ENCODE measurements at regions of chr1 and their contacts with region 1.

Region 1: GRCh38 chr1:113928941-113929749 is at the start of gene HIPK1:
- DNase-seq: peak; percentile 96 to 98
- ATAC-seq: peak; percentile 96
- H3K4me3 ChIP-seq: peak within 1 kb of the TSS; percentile 78
- H3K27ac ChIP-seq: peak within 1 kb of the TSS; percentile 79 to 94
- H3K4me1 ChIP-seq: no peaks in the 10 kb centered on the region
- H3K27me3 ChIP-seq: no peaks in the 10 kb centered on the region
- total RNA-seq, gene HIPK1: 71.1 to 75.3 TPM

Region 2: DNA sequence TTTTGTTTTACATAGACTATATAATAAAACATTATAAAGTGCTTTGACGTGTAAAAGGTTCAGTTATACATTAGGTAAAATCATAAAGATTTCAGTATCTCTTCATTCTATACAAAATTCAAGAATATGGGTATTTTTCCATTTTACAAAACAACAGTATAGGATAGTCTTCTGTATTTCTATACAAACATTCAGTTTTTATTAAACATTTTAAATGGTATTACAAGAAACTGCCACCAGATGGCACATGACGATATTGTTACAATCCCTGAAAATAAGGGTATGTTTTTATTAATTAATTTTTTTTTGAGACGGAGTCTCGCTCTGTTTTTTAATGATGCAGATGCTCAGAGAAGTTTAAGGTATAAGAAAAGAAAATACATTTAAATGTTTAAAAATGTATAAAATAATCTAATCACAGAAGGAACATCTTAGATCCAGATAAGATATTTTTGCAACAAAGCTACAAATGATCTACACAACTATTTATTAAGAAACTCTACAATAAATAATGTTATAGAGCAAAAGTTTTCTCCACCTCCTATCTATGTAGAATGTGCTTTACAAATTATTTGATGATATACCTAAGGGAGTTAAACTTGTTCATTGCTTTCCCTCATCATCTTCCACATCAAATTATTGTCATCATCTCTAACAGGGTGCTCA is 93.4 kb before region 1 on chr1:
- intact Hi-C with region 1: loop called in 1 of 2 experiments (anchors 10 kb)
- DNase-seq: no peak
- ATAC-seq: peak; percentile 44
- H3K4me3 ChIP-seq: no peak overlapping the region
- H3K27ac ChIP-seq: no peak overlapping the region
- H3K4me1 ChIP-seq: no peaks in the 10 kb centered on the region
- H3K27me3 ChIP-seq: no peaks in the 10 kb centered on the region

Region 3: DNA sequence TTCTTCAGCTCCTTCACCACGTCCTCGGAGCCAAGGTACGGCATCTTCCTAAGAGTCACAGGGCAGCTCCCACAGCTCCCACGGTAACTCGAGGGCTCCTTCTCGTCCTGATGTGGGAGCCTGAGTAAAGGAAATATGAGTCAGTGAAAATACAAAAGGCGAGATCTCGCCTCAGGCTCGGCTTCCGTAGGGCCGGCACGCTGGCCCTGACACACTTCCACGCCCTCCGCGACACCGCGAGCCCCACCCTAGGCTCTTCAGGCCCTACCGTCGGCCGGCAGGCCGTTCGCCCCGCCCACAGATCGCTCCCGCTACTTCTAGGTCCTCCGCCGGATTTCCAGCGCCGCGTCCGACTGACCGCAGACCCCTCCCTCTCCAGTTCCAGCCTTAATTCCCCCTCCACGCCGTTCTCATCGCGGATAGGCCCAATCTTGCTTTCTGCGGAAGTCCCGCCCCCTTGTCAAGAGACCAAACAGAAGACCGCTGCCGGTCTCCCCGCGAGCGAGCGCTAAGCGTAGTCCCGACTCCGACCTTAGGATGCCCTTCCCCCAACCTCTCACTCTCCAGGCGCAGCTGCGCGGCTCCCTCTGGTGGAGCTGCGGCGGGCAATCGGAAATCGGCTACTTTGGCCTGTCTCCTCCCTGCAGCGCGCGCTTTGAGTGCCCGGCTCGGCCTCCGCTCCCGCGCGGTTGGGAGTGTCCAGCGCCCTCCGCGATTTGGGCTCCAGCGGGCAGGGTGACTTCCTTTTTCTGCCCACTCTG is 24.3 kb before region 1 on chr1 and contains the starts of genes AP4B1 and DCLRE1B:
- intact Hi-C with region 1: loop called (anchors 1 kb)
- DNase-seq: peak; percentile 100
- ATAC-seq: peak; percentile 99
- H3K4me3 ChIP-seq: peak within 1 kb of the TSS; percentile 44 to 76
- H3K27ac ChIP-seq: peak within 1 kb of the TSS; percentile 45 to 97
- H3K4me1 ChIP-seq: peaks cover 0 to 4% of the 10 kb centered on the region in 2 donors
- H3K27me3 ChIP-seq: no peaks in the 10 kb centered on the region
- total RNA-seq, gene AP4B1: 15.7 to 24.8 TPM
- total RNA-seq, gene DCLRE1B: 4.2 to 6.3 TPM

Region 4: DNA sequence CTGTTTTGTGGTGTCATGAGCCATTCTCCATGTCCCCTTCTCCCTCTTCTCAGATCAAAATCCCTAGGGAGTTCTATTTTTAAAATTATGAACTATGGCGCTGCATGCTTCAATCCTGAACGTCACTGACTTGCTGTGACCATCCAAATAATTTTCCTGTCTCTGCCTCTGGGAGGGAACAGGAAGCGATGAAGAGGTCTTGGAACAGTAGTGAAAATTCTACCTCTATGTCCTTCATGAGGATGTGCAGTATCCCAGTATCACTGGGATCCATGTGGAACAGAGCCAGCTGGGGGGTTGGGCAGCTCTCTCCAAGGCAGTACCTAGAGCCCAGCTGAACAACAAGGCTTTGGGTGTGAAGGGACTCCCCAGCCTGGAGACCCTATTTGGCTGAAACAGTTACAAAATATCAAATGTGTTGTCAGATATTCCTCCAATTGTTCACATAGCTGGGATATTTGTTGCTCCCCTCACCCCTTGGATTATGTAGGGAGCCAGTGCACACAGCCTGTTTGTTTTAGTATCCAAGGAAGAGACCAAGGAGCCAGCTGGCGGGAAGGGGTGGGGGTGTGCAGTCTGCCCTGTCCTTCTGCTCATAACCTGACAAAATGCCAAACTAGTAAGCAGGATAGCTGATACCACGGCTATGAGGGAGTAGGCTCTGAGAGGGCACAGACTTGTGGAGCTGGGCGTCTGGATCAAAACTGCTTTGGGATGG is 16.4 kb before region 1 on chr1:
- intact Hi-C with region 1: loop called in 1 of 2 experiments (anchors 2 kb)
- DNase-seq: no peak
- ATAC-seq: peak; percentile 46
- H3K4me3 ChIP-seq: no peak overlapping the region
- H3K27ac ChIP-seq: peak overlapping the region in 1 of 2 donors; percentile 30
- H3K4me1 ChIP-seq: peaks cover 0 to 2% of the 10 kb centered on the region in 2 donors
- H3K27me3 ChIP-seq: no peaks in the 10 kb centered on the region